IMR-90 (cell line): ENCODE measurements at regions of chr11 and their contacts with region 1.

Region 1: DNA sequence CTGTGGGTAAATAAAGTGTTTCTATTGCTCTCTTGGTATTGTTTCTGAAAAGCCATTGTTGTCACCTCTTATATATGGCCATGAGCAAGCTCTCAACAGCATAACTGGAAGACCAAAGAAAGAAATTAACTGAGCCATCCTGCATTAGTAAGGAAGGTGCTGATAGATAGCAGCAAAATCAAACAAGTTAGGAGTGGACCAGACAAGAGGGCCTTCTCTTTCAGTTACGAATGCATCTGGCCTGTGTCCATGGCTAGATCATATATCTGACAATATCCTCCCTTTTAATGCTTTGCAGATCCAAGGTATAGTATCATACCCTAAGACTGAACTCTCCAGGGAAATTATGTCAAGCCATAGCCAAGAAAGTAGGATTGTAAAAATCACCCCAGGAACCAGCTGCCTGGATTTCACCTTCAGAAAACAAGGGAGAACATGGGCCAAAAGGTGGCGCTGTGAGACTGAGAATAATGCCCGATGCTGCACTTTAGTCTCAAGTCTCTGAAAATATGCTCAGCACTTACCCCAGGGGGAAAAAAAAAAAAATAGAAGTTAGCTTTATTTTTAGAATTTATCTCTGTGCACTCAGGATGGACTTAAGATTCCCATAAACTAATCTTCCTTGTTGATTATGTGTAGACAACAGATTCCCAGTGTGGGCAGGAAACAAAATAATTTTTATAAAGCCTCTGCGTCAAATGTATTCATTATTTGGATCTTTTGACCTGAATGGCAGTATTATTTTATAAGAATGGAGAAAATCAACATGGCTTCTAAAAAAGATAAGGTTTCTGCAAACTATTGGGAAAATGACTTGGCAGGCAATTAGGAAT is 415.1 kb downstream of the ETS1 start:
- DNase-seq: peak; percentile 86
- ATAC-seq: peak; percentile 87
- H3K4me3 ChIP-seq: no peak overlapping the region
- H3K27ac ChIP-seq: no peak overlapping the region
- H3K4me1 ChIP-seq: peaks cover 2% of the 10 kb centered on the region; the same call in 1 of the 2 replicates
- H3K27me3 ChIP-seq: peaks cover 7% of the 10 kb centered on the region
- CTCF ChIP-seq: peak; percentile 92
- POLR2A ChIP-seq: peak; percentile 37; the same call in 1 of the 2 replicates
- RAD21 ChIP-seq: peak; percentile 95

Region 2: GRCh38 chr11:128210148-128210940 is 38.1 kb after region 1 on chr11:
- CTCF ChIA-PET with region 1: no interaction called
- POLR2A ChIA-PET with region 1: no interaction called
- dilution Hi-C with region 1: no loop called
- in situ Hi-C with region 1: no loop called
- intact Hi-C with region 1: no loop called
- DNase-seq: peak; percentile 94
- ATAC-seq: peak; percentile 74
- H3K4me3 ChIP-seq: no peak overlapping the region; the same call in 1 of the 2 replicates
- H3K27ac ChIP-seq: no peak overlapping the region
- H3K4me1 ChIP-seq: peaks cover 5% of the 10 kb centered on the region
- H3K27me3 ChIP-seq: no peaks in the 10 kb centered on the region
- CTCF ChIP-seq: no peak
- POLR2A ChIP-seq: no peak
- RAD21 ChIP-seq: no peak

Region 3: DNA sequence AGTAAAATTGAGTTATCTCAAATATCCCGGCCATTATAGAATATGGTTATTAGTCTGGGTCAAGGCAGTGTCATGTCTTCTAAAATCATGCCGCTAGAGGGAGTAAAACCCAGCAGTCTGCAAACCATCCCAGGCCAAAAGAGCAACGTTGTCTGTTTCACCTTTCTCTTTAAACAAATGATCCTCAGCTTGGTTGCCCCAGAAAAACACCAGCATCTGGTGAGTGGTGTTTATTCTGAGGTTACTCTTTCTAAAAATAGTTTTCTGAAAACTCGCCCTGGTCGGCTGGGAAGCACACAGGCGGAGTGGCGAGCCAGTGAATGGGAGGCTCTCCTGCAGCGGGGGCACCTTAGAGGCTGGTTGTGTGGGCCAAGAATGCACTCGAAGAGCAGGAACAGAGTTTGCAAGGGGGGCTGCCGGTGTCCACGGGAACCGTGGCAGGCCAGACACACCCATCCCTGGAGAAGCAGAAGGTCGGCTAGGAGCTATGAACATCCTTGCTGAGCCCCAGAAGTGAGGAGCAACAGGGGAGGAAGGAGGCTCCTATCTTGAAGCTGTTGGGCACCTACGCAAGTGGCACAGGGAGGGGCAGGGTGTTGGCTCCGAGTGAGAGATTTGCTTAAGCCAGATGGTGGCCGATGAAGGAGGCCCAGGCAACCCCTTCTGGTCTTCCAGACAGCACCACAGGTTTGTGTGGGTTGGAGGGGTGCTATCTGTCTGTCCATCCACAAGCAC is 118.0 kb after region 1 on chr11:
- CTCF ChIA-PET with region 1: interaction called, 7 read pairs
- POLR2A ChIA-PET with region 1: no interaction called
- dilution Hi-C with region 1: no loop called
- in situ Hi-C with region 1: loop called (anchors 5 kb)
- intact Hi-C with region 1: loop called (anchors 1 kb)
- DNase-seq: peak; percentile 95
- ATAC-seq: peak; percentile 95
- H3K4me3 ChIP-seq: no peak overlapping the region
- H3K27ac ChIP-seq: no peak overlapping the region
- H3K4me1 ChIP-seq: peaks cover 14% of the 10 kb centered on the region
- H3K27me3 ChIP-seq: peaks cover 1% of the 10 kb centered on the region; the same call in 1 of the 2 replicates
- CTCF ChIP-seq: peak; percentile 89
- POLR2A ChIP-seq: peak; percentile 46; the same call in 1 of the 2 replicates
- RAD21 ChIP-seq: peak; percentile 99

Region 4: DNA sequence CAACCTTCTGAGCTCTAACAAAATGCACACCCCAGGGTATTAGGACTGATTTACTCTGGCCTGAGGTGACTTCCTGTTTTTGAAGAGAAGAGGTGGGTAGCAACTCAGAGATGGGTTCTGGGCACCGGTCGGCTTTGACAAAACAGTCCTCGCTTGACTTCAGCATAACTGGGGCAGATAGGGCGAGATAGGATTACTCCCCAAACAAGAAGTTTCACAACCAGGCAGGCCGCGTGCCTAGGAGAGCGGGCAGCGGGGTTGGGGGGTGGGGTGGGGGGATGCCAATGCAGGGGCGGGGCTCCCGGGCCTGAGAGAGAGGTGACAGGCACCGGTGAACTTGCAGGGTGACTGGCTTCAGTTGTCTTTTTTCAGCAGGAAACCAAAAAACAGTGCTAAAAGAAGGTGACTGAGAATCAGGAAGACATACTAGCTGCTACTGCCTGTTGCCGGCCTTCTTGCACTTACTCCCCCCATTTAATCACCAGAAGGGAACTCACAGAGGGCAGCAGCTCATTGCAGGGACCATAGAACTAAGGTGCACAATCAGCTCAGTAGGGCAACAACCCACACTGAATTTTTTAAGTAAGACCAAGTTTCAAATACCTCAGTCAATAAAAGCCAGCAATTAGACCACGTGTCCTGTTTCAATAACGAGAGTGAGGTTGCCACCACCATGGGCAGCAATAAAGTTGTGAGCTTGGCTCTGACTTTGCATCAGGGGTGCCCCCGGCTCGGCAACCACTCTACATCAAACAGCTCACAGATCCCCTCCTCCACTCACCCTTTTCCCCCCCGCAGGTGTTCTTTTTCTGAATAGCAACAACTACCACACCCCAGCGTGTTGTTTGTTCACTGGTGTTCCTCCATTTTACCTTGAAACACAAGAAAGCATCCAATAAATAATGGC is 452.3 kb after region 1 on chr11:
- CTCF ChIA-PET with region 1: interaction called, 5 read pairs
- POLR2A ChIA-PET with region 1: no interaction called
- dilution Hi-C with region 1: loop called (anchors 25 kb)
- in situ Hi-C with region 1: loop called (anchors 5 kb)
- intact Hi-C with region 1: no loop called
- DNase-seq: no peak
- ATAC-seq: no peak
- H3K4me3 ChIP-seq: no peak overlapping the region
- H3K27ac ChIP-seq: no peak overlapping the region
- H3K4me1 ChIP-seq: peaks cover 6% of the 10 kb centered on the region
- H3K27me3 ChIP-seq: no peaks in the 10 kb centered on the region
- CTCF ChIP-seq: no peak
- POLR2A ChIP-seq: no peak
- RAD21 ChIP-seq: no peak

Region 5: GRCh38 chr11:128776424-128777284 is 604.4 kb after region 1 on chr11:
- CTCF ChIA-PET with region 1: no interaction called
- POLR2A ChIA-PET with region 1: no interaction called
- dilution Hi-C with region 1: no loop called
- in situ Hi-C with region 1: no loop called
- intact Hi-C with region 1: loop called (anchors 5 kb)
- DNase-seq: peak; percentile 33
- ATAC-seq: peak; percentile 94
- H3K4me3 ChIP-seq: no peak overlapping the region
- H3K27ac ChIP-seq: no peak overlapping the region; the same call in 1 of the 2 replicates
- H3K4me1 ChIP-seq: peaks cover 7% of the 10 kb centered on the region
- H3K27me3 ChIP-seq: no peaks in the 10 kb centered on the region
- CTCF ChIP-seq: peak; percentile 59
- POLR2A ChIP-seq: no peak
- RAD21 ChIP-seq: peak; percentile 50

Region 6: DNA sequence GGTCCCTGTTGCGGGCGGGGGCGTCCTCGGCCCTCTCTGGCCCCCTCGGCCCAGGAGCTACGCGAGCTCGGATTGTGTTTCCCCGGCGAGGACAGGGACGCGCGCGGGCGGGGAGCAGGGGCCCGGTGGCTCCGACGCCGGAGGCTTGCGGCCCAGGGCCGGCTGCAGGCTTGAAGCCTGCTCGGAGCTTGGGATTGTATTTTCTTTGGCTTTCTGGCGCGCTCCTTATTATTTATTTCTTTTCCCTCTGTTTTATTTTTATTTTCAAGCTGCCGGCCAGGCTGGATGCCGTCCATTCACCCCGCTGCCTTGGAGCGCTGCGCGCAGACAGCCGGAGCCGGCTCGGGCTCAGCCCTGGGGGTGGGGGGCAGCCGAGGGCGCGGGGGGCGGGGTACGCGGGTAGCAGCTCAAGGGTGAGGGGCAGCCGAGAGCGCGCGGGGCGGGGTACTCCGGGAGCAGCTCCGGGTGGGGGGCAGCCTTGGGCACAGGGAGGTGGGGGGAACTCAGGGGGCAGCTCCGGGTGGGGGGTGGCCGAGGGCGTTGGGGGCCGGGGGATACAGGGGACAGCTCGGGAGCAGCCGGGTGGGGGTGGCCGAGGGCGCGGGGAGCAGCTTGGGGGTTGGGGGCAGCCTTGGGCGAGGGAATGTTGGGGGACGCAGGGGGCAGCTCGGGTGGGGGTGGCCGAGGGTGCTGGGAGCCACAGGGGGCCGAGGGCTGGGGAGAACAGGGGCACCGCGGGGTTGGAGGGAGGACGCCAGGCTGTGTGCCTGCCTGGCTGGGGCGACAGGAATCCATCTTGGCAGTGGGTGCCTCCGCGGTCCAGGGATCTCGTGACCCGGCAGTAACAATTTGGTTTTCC is 652.2 kb after region 1 on chr11:
- CTCF ChIA-PET with region 1: interaction called, 13 read pairs
- POLR2A ChIA-PET with region 1: no interaction called
- dilution Hi-C with region 1: loop called (anchors 25 kb)
- in situ Hi-C with region 1: loop called (anchors 5 kb)
- intact Hi-C with region 1: no loop called
- DNase-seq: no peak
- ATAC-seq: peak; percentile 66
- H3K4me3 ChIP-seq: no peak overlapping the region
- H3K27ac ChIP-seq: no peak overlapping the region
- H3K4me1 ChIP-seq: no peaks in the 10 kb centered on the region
- H3K27me3 ChIP-seq: no peaks in the 10 kb centered on the region
- CTCF ChIP-seq: no peak
- POLR2A ChIP-seq: no peak
- RAD21 ChIP-seq: no peak

Region 7: DNA sequence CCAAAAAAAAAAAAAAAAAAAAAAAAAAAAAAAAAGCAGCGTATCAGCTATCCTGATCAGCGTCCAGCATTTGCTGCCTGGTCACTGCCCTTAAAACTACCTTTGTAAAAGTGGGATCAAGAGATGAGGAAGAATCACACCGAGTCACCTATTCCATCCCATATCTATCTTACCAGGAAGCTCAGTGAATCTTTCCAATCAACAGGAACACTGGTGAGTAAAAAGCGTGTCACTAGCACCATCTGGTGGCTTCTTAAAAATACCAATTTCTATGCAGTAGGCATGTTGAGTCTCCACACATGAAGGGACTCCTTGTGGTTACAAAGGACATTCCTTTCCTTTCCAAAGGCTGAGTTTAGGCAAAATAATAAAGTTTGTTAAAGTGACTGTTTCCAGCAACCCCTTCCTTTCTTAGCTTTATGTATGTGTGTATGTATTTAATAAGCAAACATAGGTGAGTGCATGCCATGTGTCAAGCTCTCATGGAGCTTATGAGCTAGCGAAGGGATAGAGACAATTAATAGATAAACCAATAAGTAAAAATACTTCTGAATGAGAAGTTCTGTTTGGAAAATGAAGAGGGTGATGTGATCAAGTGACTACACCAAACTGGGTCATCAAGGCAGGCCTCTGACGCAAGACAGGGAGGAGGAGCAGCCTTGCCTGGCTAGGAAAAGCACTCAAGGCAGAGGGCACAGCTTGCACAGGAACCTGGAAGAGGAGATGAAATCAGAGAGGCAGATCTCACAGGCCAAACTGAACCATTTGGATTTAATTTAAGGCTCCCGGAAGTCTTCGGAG is 784.3 kb after region 1 on chr11:
- CTCF ChIA-PET with region 1: interaction called, 4 read pairs
- POLR2A ChIA-PET with region 1: no interaction called
- dilution Hi-C with region 1: no loop called
- in situ Hi-C with region 1: loop called (anchors 25 kb)
- intact Hi-C with region 1: loop called (anchors 1 kb)
- DNase-seq: peak; percentile 78
- ATAC-seq: peak; percentile 83
- H3K4me3 ChIP-seq: no peak overlapping the region
- H3K27ac ChIP-seq: no peak overlapping the region
- H3K4me1 ChIP-seq: no peaks in the 10 kb centered on the region
- H3K27me3 ChIP-seq: peaks cover 10% of the 10 kb centered on the region
- CTCF ChIP-seq: peak; percentile 88
- POLR2A ChIP-seq: no peak
- RAD21 ChIP-seq: peak; percentile 90